Activated T-helper 1 cell treated with anti-CD3 and anti-CD28 coated beads, Interleukin-12 subunit alpha, Interleukin-12 subunit beta, Interleukin-2, Interleukin-4 antibody, amounts not matched to agents 30 ng/mL and 10 ng/mL and 1 ng/mL, durations not matched to agents 14 hours and 24 hours and 36 hours (primary cell): ENCODE measurements at regions of chr7 and their contacts with region 1.

Region 1: GRCh38 chr7:133081599-133082389 is at the start of gene CHCHD3:
- DNase-seq: peak; percentile 95
- H3K4me3 Mint-ChIP-seq: peak within 1 kb of the TSS; percentile 93
- H3K27ac Mint-ChIP-seq: peak within 1 kb of the TSS; percentile 94
- H3K4me1 Mint-ChIP-seq: peaks cover 33% of the 10 kb centered on the region
- H3K27me3 Mint-ChIP-seq: no peaks in the 10 kb centered on the region
- total RNA-seq, gene CHCHD3: 69.9 and 76.8 TPM in 2 replicates

Region 2: GRCh38 chr7:132437730-132438129 is 644.1 kb before region 1 on chr7:
- intact Hi-C with region 1: loop called (anchors 5 kb)
- DNase-seq: peak; percentile 58
- H3K4me3 Mint-ChIP-seq: peak overlapping the region; percentile 6
- H3K27ac Mint-ChIP-seq: peak overlapping the region; percentile 68
- H3K4me1 Mint-ChIP-seq: peaks cover 81% of the 10 kb centered on the region
- H3K27me3 Mint-ChIP-seq: peaks cover 6% of the 10 kb centered on the region

Region 3: GRCh38 chr7:132882714-132883428 is 198.9 kb before region 1 on chr7:
- intact Hi-C with region 1: loop called (anchors 2 kb)
- DNase-seq: peak; percentile 5
- H3K4me3 Mint-ChIP-seq: no peak overlapping the region
- H3K27ac Mint-ChIP-seq: no peak overlapping the region
- H3K4me1 Mint-ChIP-seq: peaks cover 26% of the 10 kb centered on the region
- H3K27me3 Mint-ChIP-seq: no peaks in the 10 kb centered on the region

Region 4: GRCh38 chr7:133252858-133253518 is 171.2 kb after region 1 on chr7 and contains the start of gene EXOC4:
- intact Hi-C with region 1: loop called (anchors 1 kb)
- DNase-seq: peak; percentile 92
- H3K4me3 Mint-ChIP-seq: peak within 1 kb of the TSS; percentile 97
- H3K27ac Mint-ChIP-seq: peak within 1 kb of the TSS; percentile 93
- H3K4me1 Mint-ChIP-seq: peaks cover 43% of the 10 kb centered on the region
- H3K27me3 Mint-ChIP-seq: peaks cover 2% of the 10 kb centered on the region
- total RNA-seq, gene EXOC4: 51.6 and 58.6 TPM in 2 replicates

Region 5: GRCh38 chr7:133320891-133321290 is 239.1 kb after region 1 on chr7:
- intact Hi-C with region 1: no loop called
- DNase-seq: no peak
- H3K4me3 Mint-ChIP-seq: no peak overlapping the region
- H3K27ac Mint-ChIP-seq: no peak overlapping the region
- H3K4me1 Mint-ChIP-seq: no peaks in the 10 kb centered on the region
- H3K27me3 Mint-ChIP-seq: no peaks in the 10 kb centered on the region

Region 6: DNA sequence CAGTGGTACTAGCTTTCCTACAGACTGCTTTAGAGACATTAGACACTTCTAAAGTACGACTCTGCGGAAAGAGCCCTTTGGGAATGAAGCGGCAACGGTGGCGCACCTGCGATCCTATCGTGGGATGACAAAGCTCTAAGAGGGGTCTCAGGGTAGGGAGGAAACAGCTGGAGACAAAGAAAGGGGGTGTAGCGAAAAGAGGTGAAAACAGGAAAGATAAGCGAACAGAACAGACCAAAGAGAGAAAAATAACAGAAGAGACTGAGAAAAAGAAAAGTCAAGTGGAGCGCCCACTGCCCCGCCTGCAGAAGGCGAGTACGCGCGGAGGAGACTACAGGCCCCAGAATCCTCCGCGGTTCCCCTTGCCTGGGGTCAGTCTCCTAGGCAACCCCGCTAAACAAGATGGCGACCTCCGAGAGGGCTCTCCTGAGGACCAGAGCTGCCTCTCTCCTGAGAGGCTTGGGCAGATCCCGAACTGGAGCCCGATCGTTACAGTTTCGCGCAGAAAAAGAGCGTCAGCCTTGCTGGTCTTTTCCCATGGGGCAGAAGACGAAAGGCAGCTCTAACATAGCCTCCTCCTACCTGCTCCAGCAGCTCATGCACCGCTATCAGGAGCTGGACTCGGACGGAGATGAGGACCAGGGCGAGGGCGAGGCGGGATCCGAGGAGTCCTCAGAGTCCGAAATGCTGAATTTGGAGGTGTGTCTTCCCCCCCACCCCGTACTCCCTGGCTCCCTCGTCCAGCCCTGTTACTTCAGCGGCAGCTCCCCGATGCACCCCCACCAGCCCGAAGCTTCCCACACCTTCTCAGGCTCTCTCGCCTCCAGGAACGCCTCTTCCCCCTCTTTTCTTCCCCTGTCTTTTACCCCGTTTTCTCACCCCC is 1045.4 kb after region 1 on chr7 and contains the start of gene LRGUK:
- intact Hi-C with region 1: loop called (anchors 1 kb)
- DNase-seq: peak; percentile 72
- H3K4me3 Mint-ChIP-seq: peak within 1 kb of the TSS; percentile 88
- H3K27ac Mint-ChIP-seq: peak within 1 kb of the TSS; percentile 42
- H3K4me1 Mint-ChIP-seq: peaks cover 14% of the 10 kb centered on the region
- H3K27me3 Mint-ChIP-seq: peaks cover 19% of the 10 kb centered on the region
- total RNA-seq, gene LRGUK: 0.05 TPM in 1 of 2 replicates, not detected in the other